T-cell (primary cell): ENCODE measurements at regions of chr3 and their contacts with region 1.

Region 1: GRCh38 chr3:52259035-52259434 is 13.5 kb downstream of the PPM1M start:
- DNase-seq: no peak
- ATAC-seq: no peak
- H3K4me3 ChIP-seq: no peak overlapping the region
- H3K4me3 Mint-ChIP-seq: no peak overlapping the region
- H3K27ac ChIP-seq: peak overlapping the region; percentile 35
- H3K27ac Mint-ChIP-seq: peak overlapping the region; percentile 97 to 99
- H3K4me1 ChIP-seq: peaks cover 65 to 74% of the 10 kb centered on the region in 2 experiments
- H3K4me1 Mint-ChIP-seq: peaks cover 93 to 95% (median 94%) of the 10 kb centered on the region in 3 donors
- H3K27me3 ChIP-seq: no peaks in the 10 kb centered on the region
- H3K27me3 Mint-ChIP-seq: no peaks in the 10 kb centered on the region

Region 2: GRCh38 chr3:52050571-52050970 is 208.5 kb before region 1 on chr3:
- CTCF ChIA-PET with region 1: no interaction called
- POLR2A ChIA-PET with region 1: interaction called, 4 to 10 read pairs
- DNase-seq: no peak
- ATAC-seq: no peak
- H3K4me3 ChIP-seq: no peak overlapping the region
- H3K4me3 Mint-ChIP-seq: peak overlapping the region in 1 of 3 donors; percentile 92
- H3K27ac ChIP-seq: peak overlapping the region; percentile 82
- H3K27ac Mint-ChIP-seq: peak overlapping the region; percentile 96 to 97
- H3K4me1 ChIP-seq: peaks cover 21 to 90% of the 10 kb centered on the region in 2 experiments
- H3K4me1 Mint-ChIP-seq: peaks cover 63 to 69% (median 64%) of the 10 kb centered on the region in 3 donors
- H3K27me3 ChIP-seq: no peaks in the 10 kb centered on the region
- H3K27me3 Mint-ChIP-seq: no peaks in the 10 kb centered on the region

Region 3: DNA sequence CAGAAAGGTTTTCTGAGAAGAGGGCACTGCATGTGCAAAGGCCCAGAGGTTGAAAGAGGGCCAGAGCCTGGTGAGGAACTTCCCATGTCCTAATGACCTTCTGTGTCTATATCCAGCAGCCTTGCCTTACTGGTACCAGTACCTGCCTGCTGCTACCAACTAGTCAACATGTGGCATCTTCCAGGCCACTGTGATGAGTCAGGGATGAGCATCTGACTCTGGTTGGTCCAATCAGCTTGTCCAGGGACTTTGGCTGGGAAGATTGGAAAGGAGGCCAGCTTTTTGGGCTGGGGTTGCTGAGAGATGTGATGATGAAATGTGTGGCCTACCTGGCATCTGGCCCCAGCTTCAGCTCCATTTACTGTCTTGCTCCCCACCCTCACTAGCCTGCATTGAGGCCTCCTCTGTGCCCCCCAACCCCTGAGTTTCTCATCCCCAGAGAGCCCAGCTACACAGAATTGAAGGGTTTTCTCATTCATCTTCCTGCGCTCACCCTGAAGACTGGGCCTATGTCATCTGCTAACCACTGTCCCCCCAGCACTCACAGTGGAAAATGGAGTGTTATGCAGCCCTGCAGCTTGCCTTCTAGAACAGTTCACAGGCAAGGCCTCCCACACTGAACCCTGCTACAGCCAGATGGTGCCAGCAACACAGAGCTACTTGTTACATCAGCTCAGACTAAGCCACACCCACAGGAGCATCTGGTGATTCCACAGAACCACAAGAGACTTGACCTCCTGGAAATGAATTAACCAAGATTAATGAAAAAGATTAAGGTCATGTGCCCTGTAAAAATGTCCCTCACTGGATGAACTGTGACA is 18.8 kb before region 1 on chr3:
- CTCF ChIA-PET with region 1: interaction called in 1 of 2 experiments, 15 read pairs
- POLR2A ChIA-PET with region 1: interaction called, 4 to 5 read pairs
- DNase-seq: peak in 11 of 35 experiments; percentile 29 to 67 (median 42)
- ATAC-seq: peak in 2 of 4 experiments; percentile 10 to 17
- H3K4me3 ChIP-seq: peak overlapping the region; percentile 84 to 99
- H3K4me3 Mint-ChIP-seq: peak overlapping the region; percentile 91 to 98 (median 97)
- H3K27ac ChIP-seq: peak overlapping the region; percentile 83
- H3K27ac Mint-ChIP-seq: peak overlapping the region; percentile 89 to 91
- H3K4me1 ChIP-seq: peaks cover 54 to 77% of the 10 kb centered on the region in 2 experiments
- H3K4me1 Mint-ChIP-seq: peaks cover 81 to 87% (median 84%) of the 10 kb centered on the region in 3 donors
- H3K27me3 ChIP-seq: no peaks in the 10 kb centered on the region
- H3K27me3 Mint-ChIP-seq: no peaks in the 10 kb centered on the region